Gastrocnemius medialis (tissue), 4 donors: ENCODE measurements at regions of chr12 and their contacts with region 1.

Region 1: GRCh38 chr12:93979189-93979588 is 169.2 kb upstream of the PLXNC1 start:
- DNase-seq: no peak
- ATAC-seq: no peak
- H3K4me3 ChIP-seq: no peak overlapping the region
- H3K27ac ChIP-seq: peak overlapping the region in 1 of 4 donors; percentile 15
- H3K4me1 ChIP-seq: peaks cover 4 to 13% of the 10 kb centered on the region in 2 donors
- H3K27me3 ChIP-seq: no peaks in the 10 kb centered on the region
- CTCF ChIP-seq: peak in 4 of 5 experiments; percentile 35 to 48 (median 42)
- POLR2A ChIP-seq: no peak

Region 2: GRCh38 chr12:93502802-93503623 is 476.2 kb before region 1 on chr12:
- in situ Hi-C with region 1: no loop called
- intact Hi-C with region 1: loop called (anchors 10 kb)
- DNase-seq: no peak
- ATAC-seq: no peak
- H3K4me3 ChIP-seq: no peak overlapping the region
- H3K27ac ChIP-seq: no peak overlapping the region
- H3K4me1 ChIP-seq: no peaks in the 10 kb centered on the region
- H3K27me3 ChIP-seq: no peaks in the 10 kb centered on the region
- CTCF ChIP-seq: peak; percentile 49 to 79 (median 71)
- POLR2A ChIP-seq: no peak